ENCODE measurements at regions of chr15 and their contacts with region 1.

Region 1: GRCh38 chr15:66483131-66483566 is 14.4 kb downstream of the SNAPC5 start:
- DNase-seq: no peak
- H3K4me3 Mint-ChIP-seq: no peak overlapping the region
- H3K27ac Mint-ChIP-seq: no peak overlapping the region
- H3K4me1 Mint-ChIP-seq: peaks cover 5% of the 10 kb centered on the region
- H3K27me3 Mint-ChIP-seq: no peaks in the 10 kb centered on the region

Region 2: GRCh38 chr15:66472176-66472999 is 10.8 kb before region 1 on chr15:
- CTCF ChIA-PET with region 1: interaction called, 13 read pairs
- POLR2A ChIA-PET with region 1: no interaction called
- DNase-seq: peak; percentile 75
- H3K4me3 Mint-ChIP-seq: peak overlapping the region; percentile 64
- H3K27ac Mint-ChIP-seq: peak overlapping the region; percentile 95
- H3K4me1 Mint-ChIP-seq: peaks cover 40% of the 10 kb centered on the region
- H3K27me3 Mint-ChIP-seq: no peaks in the 10 kb centered on the region

Region 3: DNA sequence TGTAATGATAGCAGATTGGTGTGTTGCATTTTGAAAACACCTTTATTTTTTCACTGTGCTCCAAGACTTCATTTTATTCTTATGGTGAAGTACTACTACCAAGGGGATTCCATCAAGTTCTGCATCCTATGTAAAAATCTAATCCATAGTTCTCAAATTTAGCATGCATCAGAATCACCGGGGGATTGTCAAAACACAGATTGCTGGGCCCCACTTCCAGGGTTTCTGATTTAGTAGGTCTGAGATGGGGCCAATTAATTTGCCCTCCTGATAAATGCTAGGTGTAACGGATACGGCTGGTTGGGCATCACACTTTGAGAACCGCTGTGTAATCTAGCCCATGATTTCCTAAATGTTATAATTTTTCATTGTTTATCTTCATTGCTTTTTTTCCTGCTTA is 22.7 kb after region 1 on chr15:
- CTCF ChIA-PET with region 1: no interaction called
- POLR2A ChIA-PET with region 1: no interaction called
- DNase-seq: no peak
- H3K4me3 Mint-ChIP-seq: peak overlapping the region; percentile 100
- H3K27ac Mint-ChIP-seq: peak overlapping the region; percentile 99
- H3K4me1 Mint-ChIP-seq: peaks cover 54% of the 10 kb centered on the region
- H3K27me3 Mint-ChIP-seq: no peaks in the 10 kb centered on the region

Measured in activated CD4-positive, alpha-beta T cell treated with anti-CD3 and anti-CD28 coated beads, Interleukin-2, amount 10 ng/mL, durations not matched to agents 7 days and 5 days (primary cell).